Heart left ventricle (tissue), 16 donors: ENCODE measurements at regions of chr2 and their contacts with region 1.

Region 1: DNA sequence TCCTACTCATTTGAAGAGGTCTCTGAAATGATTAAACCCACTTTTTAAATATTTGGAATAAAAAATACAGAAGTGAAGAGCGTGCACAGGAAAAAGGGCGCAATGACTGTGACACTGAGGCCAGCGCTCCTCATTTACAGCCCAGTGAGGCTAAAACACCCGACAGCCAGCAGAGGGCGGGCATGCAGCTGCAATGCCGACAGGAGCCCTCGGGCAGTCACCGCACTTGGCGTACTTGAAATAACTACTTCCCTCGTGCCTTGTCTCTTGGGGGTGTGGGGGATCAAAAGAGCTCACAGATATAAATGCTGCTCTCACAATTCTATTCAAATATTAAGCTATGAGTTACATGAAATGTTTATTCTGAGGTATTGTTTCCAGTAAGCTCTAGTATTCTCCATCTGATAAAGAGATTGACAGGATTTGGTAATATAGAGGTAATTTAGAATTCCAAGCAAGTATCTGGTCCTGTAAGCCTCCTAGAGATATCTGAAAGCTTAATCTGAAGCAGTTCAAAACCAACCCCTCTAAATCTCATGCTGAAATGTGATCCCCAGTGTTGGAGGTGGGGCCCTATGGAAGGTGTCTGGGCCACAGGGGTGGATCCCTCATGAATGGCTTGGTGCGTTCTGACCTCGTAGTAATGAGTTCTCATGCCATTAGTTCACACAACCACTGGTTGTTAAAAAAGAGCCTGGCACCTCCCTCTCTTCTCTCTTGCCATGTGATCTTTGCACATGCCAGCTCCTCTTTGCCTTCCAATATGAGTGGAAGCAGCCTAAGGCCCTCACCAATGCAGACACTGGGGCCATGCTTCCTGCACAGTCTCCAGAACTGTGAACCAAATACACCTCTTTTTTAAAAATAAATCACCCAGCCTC is 93.6 kb downstream of the ZAP70 start:
- DNase-seq: peak; percentile 82 to 90 (median 87)
- ATAC-seq: peak; percentile 84 to 98 (median 96)
- H3K4me3 ChIP-seq: no peak overlapping the region
- H3K27ac ChIP-seq: peak overlapping the region in 2 of 12 donors; percentile 14 to 36
- H3K4me1 ChIP-seq: peaks cover 0 to 8% (median 5%) of the 10 kb centered on the region in 12 donors
- H3K27me3 ChIP-seq: no peaks in the 10 kb centered on the region
- CTCF ChIP-seq: peak; percentile 86 to 99 (median 94)
- POLR2A ChIP-seq: no peak

Region 2: DNA sequence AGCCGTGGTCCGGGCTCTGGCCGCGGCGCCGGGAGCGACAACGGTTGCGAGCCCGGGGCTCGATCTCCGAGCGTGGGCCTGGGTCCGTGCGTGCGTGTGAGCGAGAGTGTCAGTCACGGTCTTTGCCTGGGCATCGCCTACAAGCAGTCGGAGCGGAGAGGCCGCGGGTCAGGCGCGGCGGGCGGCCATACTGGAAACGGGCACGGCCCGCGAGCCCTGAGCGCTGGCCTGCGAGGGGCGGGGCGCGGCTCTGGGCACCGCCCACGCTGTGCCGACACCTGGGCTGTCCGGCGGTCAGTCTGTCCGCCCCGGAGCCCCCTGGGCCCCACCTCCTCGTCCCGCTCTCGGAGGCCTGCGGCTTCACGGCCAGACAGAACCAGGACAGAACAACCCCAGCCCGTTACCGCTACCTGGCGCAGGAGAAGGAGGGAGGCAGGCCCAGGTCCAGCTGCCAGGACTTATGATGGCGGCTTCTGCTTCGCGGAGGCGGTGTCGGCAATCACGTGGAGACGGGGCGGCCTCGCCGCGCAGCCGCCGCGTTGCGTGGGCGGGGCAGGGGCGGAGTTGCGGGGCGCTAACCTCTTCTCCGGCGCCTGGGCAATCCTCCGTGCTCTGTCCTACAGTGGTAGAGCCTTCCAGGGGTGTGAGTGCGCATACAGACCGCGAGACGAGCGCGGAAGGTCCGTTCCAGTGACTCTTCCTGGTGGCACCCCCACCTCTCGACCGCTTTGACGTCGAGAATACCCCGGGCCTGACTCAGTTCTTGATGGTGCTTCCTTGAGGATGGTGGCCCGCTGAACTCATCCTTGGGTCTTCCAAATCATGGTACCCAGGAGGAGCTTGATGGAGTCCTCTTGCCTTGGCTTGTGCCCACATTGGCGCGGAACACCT is 189.0 kb after region 1 on chr2 and contains the start of gene TMEM131:
- intact Hi-C with region 1: loop called (anchors 2 to 10 kb)
- DNase-seq: peak; percentile 95 to 98 (median 96)
- ATAC-seq: peak; percentile 92 to 98 (median 97)
- H3K4me3 ChIP-seq: peak within 1 kb of the TSS; percentile 75 to 97 (median 86)
- H3K27ac ChIP-seq: peak within 1 kb of the TSS; percentile 90 to 98 (median 97)
- H3K4me1 ChIP-seq: peaks cover 3 to 45% (median 31%) of the 10 kb centered on the region in 12 donors
- H3K27me3 ChIP-seq: no peaks in the 10 kb centered on the region
- CTCF ChIP-seq: no peak
- POLR2A ChIP-seq: peak in 1 of 2 donors; percentile 62
- total RNA-seq, gene TMEM131: 23.7 to 38.3 (median 31.3) TPM

Region 3: DNA sequence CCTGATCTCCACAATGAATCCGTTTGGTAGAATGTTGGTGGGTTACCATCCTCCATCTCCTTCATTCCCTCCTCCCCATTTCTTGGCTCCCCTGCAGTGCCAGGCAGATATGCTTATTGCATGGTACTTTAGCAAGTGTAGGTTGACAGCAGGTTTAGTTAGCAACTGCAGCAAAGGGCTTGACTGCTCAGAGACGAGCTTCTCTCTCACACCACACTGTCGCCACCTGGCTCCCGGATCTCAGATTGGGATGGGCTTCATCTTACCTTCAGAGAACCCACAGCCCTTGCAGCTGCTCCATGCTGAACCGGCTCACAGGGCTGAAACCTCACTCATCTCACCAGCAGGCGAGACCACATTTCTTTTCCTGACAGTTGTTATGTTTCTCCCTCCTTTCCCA is 368.8 kb after region 1 on chr2:
- intact Hi-C with region 1: loop called in 4 of 10 experiments (anchors 5 to 10 kb)
- DNase-seq: no peak
- ATAC-seq: peak in 2 of 4 donors; percentile 47 to 52
- H3K4me3 ChIP-seq: no peak overlapping the region
- H3K27ac ChIP-seq: no peak overlapping the region
- H3K4me1 ChIP-seq: no peaks in the 10 kb centered on the region
- H3K27me3 ChIP-seq: peaks cover 0 to 24% (median 0%) of the 10 kb centered on the region in 9 donors
- CTCF ChIP-seq: peak in 6 of 12 donors; percentile 5 to 31 (median 8)
- POLR2A ChIP-seq: no peak

Region 4: DNA sequence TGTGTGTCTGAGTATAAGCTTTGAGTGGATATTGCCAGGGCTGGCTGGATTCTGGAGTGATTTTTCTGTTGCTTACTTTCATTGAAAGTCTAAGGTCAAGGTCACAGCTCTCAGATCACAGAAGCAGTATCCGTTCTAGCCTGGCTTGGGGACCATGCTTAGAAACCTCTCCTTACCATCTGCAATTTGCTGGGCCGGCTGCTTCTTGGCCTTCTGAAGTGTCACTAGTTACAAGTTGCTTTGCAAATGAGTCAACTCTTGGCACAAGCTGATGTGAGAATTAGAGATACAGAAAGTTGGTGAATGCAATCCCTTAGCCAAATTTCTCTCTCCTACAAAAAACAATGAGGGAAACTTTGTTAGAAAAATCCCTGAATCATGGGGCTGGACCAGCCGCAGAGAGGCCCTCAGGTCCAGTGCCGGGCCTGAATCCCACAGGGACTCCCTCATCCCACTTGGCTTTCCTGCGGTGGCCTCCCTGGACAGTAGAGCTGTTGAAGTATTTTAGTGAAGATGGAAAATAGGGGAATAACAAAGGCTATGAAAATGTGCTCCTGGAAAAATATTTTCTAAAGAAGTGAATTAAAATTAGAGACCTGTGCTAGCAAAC is 446.6 kb after region 1 on chr2:
- intact Hi-C with region 1: loop called in 1 of 10 experiments (anchors 10 kb)
- DNase-seq: peak in 1 of 5 donors; percentile 32
- ATAC-seq: peak in 2 of 4 donors; percentile 34 to 46
- H3K4me3 ChIP-seq: no peak overlapping the region
- H3K27ac ChIP-seq: no peak overlapping the region
- H3K4me1 ChIP-seq: peaks cover 0 to 7% (median 0%) of the 10 kb centered on the region in 12 donors
- H3K27me3 ChIP-seq: no peaks in the 10 kb centered on the region
- CTCF ChIP-seq: no peak
- POLR2A ChIP-seq: no peak

Region 5: DNA sequence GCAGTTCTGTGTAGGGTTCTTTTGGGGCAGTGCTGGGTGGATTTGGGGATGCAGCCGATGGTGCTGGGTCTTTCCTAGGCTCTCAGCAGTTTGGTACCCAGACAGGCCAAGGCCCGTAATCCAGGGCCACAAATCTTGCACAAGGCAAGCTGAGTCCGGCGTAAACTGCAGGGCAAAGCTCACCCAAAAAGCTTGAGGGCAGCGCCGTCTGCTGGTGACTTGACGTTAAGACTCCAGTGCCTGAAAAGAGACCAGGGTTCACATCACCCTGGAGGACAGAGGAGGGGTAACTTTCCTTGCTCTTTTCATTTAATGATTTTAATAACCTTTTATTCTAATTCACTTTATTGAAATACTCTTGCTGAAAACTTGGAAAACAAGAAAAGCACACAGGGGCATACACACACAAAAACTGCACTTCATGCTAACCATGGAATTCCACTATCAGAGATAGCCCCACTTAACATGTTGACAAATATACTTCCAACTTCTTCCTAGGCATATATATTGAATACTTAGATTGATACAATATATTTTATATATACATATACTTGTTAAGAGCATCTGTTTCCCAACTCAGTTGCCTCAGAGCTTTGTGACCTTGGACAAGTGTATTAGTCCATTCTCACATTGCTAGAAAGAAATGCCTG is 578.2 kb after region 1 on chr2:
- intact Hi-C with region 1: loop called (anchors 1 to 5 kb)
- DNase-seq: peak; percentile 55 to 82 (median 70)
- ATAC-seq: peak; percentile 60 to 90 (median 84)
- H3K4me3 ChIP-seq: no peak overlapping the region
- H3K27ac ChIP-seq: no peak overlapping the region
- H3K4me1 ChIP-seq: peaks cover 0 to 2% (median 0%) of the 10 kb centered on the region in 12 donors
- H3K27me3 ChIP-seq: no peaks in the 10 kb centered on the region
- CTCF ChIP-seq: peak; percentile 79 to 96 (median 90)
- POLR2A ChIP-seq: no peak